Stomach (tissue), 19 donors: ENCODE measurements at regions of chr17 and their contacts with region 1.

Region 1: DNA sequence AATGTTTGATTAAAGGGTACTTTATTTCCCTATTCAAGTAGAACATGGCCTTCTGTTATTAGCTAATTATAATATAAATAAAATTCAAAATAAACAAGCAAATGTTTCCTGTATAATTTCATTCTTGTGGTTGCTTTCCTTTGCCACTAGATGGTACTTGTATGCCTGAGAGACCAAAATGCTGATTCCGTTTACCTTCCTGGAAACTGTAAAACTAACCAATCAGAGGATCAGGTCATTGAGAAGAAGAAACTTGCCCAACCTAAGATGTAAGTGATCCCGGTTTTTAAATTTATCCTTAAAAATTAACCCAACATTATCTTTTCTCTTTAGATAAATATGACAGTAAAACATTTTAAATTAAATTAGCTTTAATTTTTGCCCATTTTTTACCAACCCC is 8.1 kb upstream of the ABCA5 start:
- DNase-seq: peak in 1 of 2 donors; percentile 51
- H3K4me3 ChIP-seq: no peak overlapping the region
- H3K27ac ChIP-seq: no peak overlapping the region
- H3K4me1 ChIP-seq: no peaks in the 10 kb centered on the region
- H3K27me3 ChIP-seq: no peaks in the 10 kb centered on the region
- CTCF ChIP-seq: peak in 5 of 7 experiments; percentile 18 to 55 (median 44)
- EP300 ChIP-seq: no peak
- POLR2A ChIP-seq: no peak

Region 2: GRCh38 chr17:69300222-69300621 is 34.8 kb before region 1 on chr17:
- intact Hi-C with region 1: no loop called
- DNase-seq: no peak
- H3K4me3 ChIP-seq: no peak overlapping the region
- H3K27ac ChIP-seq: no peak overlapping the region
- H3K4me1 ChIP-seq: no peaks in the 10 kb centered on the region
- H3K27me3 ChIP-seq: no peaks in the 10 kb centered on the region
- CTCF ChIP-seq: no peak
- EP300 ChIP-seq: no peak
- POLR2A ChIP-seq: no peak

Region 3: DNA sequence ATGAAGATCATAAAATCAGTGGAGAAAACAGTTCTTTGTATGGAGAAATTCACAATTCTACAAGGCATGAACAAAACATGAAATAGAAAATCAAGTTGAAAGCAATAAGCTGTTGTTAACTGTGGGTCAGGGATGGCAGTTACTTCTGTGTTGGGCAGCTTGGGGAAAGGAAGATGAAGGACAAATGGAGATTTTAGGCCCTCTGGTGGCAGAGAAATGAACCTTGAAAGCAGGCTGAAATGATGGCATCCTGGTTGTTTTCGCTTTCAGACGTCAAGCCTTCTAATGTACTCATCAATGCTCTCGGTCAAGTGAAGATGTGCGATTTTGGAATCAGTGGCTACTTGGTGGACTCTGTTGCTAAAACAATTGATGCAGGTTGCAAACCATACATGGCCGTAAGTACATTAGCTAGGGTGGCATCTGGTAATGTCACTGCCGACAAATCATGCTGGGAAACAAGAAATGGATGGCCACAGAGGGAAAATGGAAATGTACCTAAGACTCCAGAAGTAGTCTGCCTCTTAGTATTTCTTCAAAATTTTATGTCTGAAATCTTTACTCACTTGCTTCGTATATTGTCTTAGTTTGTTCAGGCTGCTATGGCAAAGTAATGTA is 188.3 kb after region 1 on chr17:
- intact Hi-C with region 1: loop called (anchors 5 kb)
- DNase-seq: peak in 1 of 2 donors; percentile 78
- H3K4me3 ChIP-seq: no peak overlapping the region
- H3K27ac ChIP-seq: no peak overlapping the region
- H3K4me1 ChIP-seq: peaks cover 0 to 3% (median 0%) of the 10 kb centered on the region in 4 donors
- H3K27me3 ChIP-seq: no peaks in the 10 kb centered on the region
- CTCF ChIP-seq: peak in 5 of 7 experiments; percentile 42 to 76 (median 65)
- EP300 ChIP-seq: no peak
- POLR2A ChIP-seq: no peak

Region 4: GRCh38 chr17:69625474-69625873 is 290.4 kb after region 1 on chr17:
- intact Hi-C with region 1: no loop called
- DNase-seq: no peak
- H3K4me3 ChIP-seq: no peak overlapping the region
- H3K27ac ChIP-seq: no peak overlapping the region
- H3K4me1 ChIP-seq: no peaks in the 10 kb centered on the region
- H3K27me3 ChIP-seq: no peaks in the 10 kb centered on the region
- CTCF ChIP-seq: no peak
- EP300 ChIP-seq: no peak
- POLR2A ChIP-seq: no peak